Activated CD4-positive, alpha-beta T cell treated with anti-CD3 and anti-CD28 coated beads for 36 hours (primary cell): ENCODE measurements at regions of chr12 and their contacts with region 1.

Region 1: DNA sequence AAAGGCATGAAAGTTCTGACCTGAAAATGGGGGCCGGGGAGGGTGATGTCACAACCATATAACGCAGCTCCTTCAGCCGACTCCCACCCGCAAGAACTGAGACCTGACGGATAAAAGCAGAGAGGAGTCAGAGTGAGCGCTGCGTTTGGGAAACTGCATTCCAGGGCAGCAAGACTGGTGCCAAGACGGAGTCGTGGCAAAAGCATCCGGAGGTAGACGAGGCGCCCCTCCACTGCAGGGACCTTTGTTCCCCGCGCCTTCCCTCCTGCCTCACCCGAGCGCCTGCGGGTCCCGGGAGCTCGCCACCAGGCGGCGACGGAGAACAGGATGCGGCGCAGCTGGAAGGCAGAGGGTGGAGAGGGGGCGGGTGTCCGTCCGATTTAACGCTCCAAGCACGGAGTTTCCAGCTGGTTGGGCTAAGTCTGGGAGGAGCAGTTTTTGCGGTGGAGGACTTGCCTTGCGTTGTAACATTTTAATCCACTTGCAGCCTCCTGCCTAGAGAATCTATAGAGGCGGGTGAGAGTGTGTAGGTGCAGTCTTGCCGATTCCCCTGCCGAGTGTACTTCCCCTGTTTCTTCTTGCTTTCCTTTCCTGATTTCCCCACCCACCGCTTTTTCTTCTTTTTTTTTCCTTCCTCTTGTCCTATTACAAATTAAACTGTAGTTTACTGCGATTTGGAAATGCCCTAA is 1.2 kb upstream of the CPNE8 start:
- DNase-seq: peak; percentile 86
- ATAC-seq: peak; percentile 73
- H3K4me3 Mint-ChIP-seq: peak overlapping the region; percentile 84
- H3K27ac Mint-ChIP-seq: peak overlapping the region; percentile 89
- H3K4me1 Mint-ChIP-seq: peaks cover 30% of the 10 kb centered on the region
- H3K27me3 Mint-ChIP-seq: peaks cover 10% of the 10 kb centered on the region

Region 2: GRCh38 chr12:38332814-38333213 is 573.8 kb before region 1 on chr12:
- CTCF ChIA-PET with region 1: interaction called, 3 read pairs
- POLR2A ChIA-PET with region 1: no interaction called
- intact Hi-C with region 1: loop called in 1 of 2 experiments (anchors 10 kb)
- DNase-seq: no peak
- ATAC-seq: no peak
- H3K4me3 Mint-ChIP-seq: no peak overlapping the region
- H3K27ac Mint-ChIP-seq: no peak overlapping the region
- H3K4me1 Mint-ChIP-seq: no peaks in the 10 kb centered on the region
- H3K27me3 Mint-ChIP-seq: no peaks in the 10 kb centered on the region

Region 3: GRCh38 chr12:38895446-38895845 is 11.2 kb before region 1 on chr12:
- CTCF ChIA-PET with region 1: interaction called, 23 read pairs
- POLR2A ChIA-PET with region 1: interaction called, 3 read pairs
- intact Hi-C with region 1: no loop called
- DNase-seq: no peak
- ATAC-seq: no peak
- H3K4me3 Mint-ChIP-seq: no peak overlapping the region
- H3K27ac Mint-ChIP-seq: no peak overlapping the region
- H3K4me1 Mint-ChIP-seq: peaks cover 15% of the 10 kb centered on the region
- H3K27me3 Mint-ChIP-seq: no peaks in the 10 kb centered on the region

Region 4: GRCh38 chr12:38998887-38999482 is 92.4 kb after region 1 on chr12:
- CTCF ChIA-PET with region 1: no interaction called
- POLR2A ChIA-PET with region 1: no interaction called
- intact Hi-C with region 1: no loop called
- DNase-seq: no peak
- ATAC-seq: no peak
- H3K4me3 Mint-ChIP-seq: no peak overlapping the region
- H3K27ac Mint-ChIP-seq: no peak overlapping the region
- H3K4me1 Mint-ChIP-seq: no peaks in the 10 kb centered on the region
- H3K27me3 Mint-ChIP-seq: no peaks in the 10 kb centered on the region

Region 5: DNA sequence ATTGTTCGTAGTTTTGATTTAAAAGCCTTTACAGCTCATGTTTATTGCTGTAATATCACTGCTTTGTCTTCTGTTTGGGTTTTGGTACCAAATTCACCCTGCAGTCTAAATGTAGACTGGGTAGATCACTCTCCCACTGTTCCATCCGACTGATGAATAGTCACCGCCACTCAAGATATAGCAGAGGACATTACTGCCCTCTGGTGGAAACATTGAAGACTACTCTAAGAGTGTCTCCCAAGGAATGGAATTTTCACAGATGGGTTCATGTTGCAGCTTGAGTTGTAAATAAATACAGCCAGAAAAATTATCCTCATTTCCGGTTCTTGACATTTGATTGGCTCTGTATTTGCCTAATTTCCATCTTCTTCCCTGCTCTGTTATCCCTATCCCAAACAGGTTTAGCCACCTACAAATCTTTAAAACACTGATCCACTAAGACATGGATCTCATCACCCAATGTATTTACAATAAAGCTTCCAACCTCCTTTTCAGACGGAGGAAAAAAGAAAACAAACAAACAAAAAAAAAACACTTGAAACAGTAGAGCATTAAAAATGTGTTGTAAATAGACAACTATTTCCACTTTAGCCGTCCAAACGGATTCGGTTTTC is 197.0 kb after region 1 on chr12:
- CTCF ChIA-PET with region 1: interaction called, 4 read pairs
- POLR2A ChIA-PET with region 1: no interaction called
- intact Hi-C with region 1: loop called (anchors 2 to 5 kb)
- DNase-seq: peak; percentile 10
- ATAC-seq: peak; percentile 81
- H3K4me3 Mint-ChIP-seq: no peak overlapping the region
- H3K27ac Mint-ChIP-seq: no peak overlapping the region
- H3K4me1 Mint-ChIP-seq: no peaks in the 10 kb centered on the region
- H3K27me3 Mint-ChIP-seq: peaks cover 2% of the 10 kb centered on the region

Region 6: GRCh38 chr12:39619660-39620433 is 713.2 kb after region 1 on chr12 and contains the start of gene ABCD2:
- CTCF ChIA-PET with region 1: no interaction called
- POLR2A ChIA-PET with region 1: no interaction called
- intact Hi-C with region 1: loop called in 1 of 2 experiments (anchors 10 kb)
- DNase-seq: peak; percentile 83
- ATAC-seq: peak; percentile 71
- H3K4me3 Mint-ChIP-seq: no peak within 1 kb of the TSS
- H3K27ac Mint-ChIP-seq: no peak within 1 kb of the TSS
- H3K4me1 Mint-ChIP-seq: peaks cover 58% of the 10 kb centered on the region
- H3K27me3 Mint-ChIP-seq: no peaks in the 10 kb centered on the region
- total RNA-seq, gene ABCD2: 2.1 to 2.3 TPM